Endothelial cell of umbilical vein (primary cell): ENCODE measurements at regions of chr4 and their contacts with region 1.

Region 1: DNA sequence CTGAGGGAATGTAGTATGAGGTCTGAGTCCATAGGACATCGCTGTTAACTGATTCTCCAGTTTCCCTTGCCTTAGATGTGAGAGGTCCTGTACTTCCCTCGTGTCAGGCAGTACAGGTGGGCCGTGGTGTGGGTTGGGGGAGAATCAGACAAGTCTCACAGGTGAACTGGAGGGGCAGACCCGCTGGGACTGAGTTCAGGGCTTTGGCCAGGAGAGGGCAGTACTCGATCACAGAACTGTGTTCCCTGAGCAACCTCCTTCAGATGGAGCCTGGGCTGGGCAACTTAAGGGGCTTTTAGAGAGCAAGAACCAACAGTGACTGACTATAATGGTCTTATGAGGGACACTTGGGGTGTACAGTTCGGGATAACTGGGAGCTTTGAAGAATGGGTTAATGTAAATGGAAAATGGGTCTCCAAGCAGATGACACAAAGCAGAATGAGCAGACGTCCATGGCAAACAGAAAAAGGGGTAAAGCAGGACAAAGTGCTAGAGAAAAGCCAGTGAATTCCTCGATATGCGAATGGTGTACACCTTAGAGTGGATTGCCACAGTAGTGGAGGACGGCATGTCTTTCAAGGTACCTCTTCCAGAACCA is 83.6 kb downstream of the CCNG2 start:
- DNase-seq: peak; percentile 56
- H3K4me3 ChIP-seq: no peak overlapping the region
- H3K27ac ChIP-seq: no peak overlapping the region
- H3K4me1 ChIP-seq: no peaks in the 10 kb centered on the region
- H3K27me3 ChIP-seq: peaks cover 2 to 4% of the 10 kb centered on the region in 2 experiments
- CTCF ChIP-seq: peak; percentile 70 to 84
- POLR2A ChIP-seq: no peak

Region 2: GRCh38 chr4:77225022-77225421 is 15.5 kb before region 1 on chr4:
- CTCF ChIA-PET with region 1: interaction called, 13 read pairs
- POLR2A ChIA-PET with region 1: no interaction called
- dilution Hi-C with region 1: no loop called
- intact Hi-C with region 1: no loop called
- DNase-seq: no peak
- H3K4me3 ChIP-seq: no peak overlapping the region
- H3K27ac ChIP-seq: no peak overlapping the region
- H3K4me1 ChIP-seq: no peaks in the 10 kb centered on the region
- H3K27me3 ChIP-seq: peaks cover 9% of the 10 kb centered on the region in 2 experiments
- CTCF ChIP-seq: no peak
- POLR2A ChIP-seq: no peak

Region 3: DNA sequence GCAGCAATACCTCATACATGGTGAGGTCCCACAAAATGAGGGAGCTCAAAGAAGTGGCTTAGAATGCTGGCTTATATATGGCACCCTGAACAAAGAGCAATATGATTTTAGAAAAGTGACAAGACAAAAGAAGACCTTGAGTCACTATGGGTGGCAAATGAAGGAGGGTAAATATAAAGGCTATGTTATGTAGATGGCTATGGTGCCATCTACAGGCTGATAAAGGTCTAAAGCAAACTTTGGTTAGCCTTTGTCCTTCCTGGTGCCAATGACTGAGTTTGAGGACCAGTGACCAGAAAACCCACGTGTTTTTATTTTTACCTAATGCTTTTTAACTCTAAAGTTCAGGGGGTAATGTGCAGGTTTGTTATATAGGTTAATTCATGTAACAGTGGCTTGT is 68.3 kb after region 1 on chr4:
- CTCF ChIA-PET with region 1: interaction called, 7 read pairs
- POLR2A ChIA-PET with region 1: no interaction called
- dilution Hi-C with region 1: no loop called
- intact Hi-C with region 1: loop called (anchors 1 kb)
- DNase-seq: peak; percentile 8
- H3K4me3 ChIP-seq: no peak overlapping the region
- H3K27ac ChIP-seq: no peak overlapping the region
- H3K4me1 ChIP-seq: no peaks in the 10 kb centered on the region
- H3K27me3 ChIP-seq: peaks cover 2 to 4% of the 10 kb centered on the region in 2 experiments
- CTCF ChIP-seq: peak; percentile 25 to 26
- POLR2A ChIP-seq: no peak

Region 4: DNA sequence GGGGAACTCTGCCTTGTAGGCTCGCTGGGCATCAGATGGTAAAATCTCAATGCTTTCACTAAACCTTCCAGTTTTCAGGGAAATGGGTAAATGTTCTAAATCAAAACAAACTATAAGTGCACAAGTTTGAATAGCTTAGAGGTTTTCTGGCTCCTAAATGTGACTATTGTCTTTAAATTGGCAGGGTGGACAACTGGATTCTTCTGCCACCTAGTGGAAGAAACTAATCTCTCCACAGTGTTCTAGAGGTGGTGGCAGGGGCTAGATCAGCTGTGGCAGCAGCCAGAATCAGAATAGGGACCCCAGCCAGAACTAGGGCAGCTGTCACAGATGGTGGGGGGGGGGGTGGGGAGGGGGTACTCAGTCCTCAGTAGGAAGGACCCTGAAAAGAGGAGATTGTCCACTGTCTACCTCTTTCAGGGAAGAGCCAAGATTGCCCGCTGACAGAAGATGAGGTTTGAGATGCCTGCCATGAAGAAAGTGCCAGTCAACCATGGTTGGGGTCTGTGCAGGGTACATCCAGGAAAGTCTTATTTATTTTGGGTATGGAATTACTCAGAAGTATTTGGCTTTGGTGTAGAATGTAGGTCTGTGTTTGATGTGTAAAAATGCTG is 117.9 kb after region 1 on chr4:
- CTCF ChIA-PET with region 1: interaction called, 116 read pairs
- POLR2A ChIA-PET with region 1: no interaction called
- dilution Hi-C with region 1: no loop called
- intact Hi-C with region 1: loop called (anchors 1 kb)
- DNase-seq: peak; percentile 41
- H3K4me3 ChIP-seq: no peak overlapping the region
- H3K27ac ChIP-seq: no peak overlapping the region
- H3K4me1 ChIP-seq: no peaks in the 10 kb centered on the region
- H3K27me3 ChIP-seq: peaks cover 5 to 6% of the 10 kb centered on the region in 2 experiments
- CTCF ChIP-seq: peak; percentile 54 to 68
- POLR2A ChIP-seq: no peak